Activated CD4-positive, alpha-beta T cell treated with anti-CD3 and anti-CD28 coated beads for 36 hours (primary cell): ENCODE measurements at regions of chr1 and their contacts with region 1.

Region 1: DNA sequence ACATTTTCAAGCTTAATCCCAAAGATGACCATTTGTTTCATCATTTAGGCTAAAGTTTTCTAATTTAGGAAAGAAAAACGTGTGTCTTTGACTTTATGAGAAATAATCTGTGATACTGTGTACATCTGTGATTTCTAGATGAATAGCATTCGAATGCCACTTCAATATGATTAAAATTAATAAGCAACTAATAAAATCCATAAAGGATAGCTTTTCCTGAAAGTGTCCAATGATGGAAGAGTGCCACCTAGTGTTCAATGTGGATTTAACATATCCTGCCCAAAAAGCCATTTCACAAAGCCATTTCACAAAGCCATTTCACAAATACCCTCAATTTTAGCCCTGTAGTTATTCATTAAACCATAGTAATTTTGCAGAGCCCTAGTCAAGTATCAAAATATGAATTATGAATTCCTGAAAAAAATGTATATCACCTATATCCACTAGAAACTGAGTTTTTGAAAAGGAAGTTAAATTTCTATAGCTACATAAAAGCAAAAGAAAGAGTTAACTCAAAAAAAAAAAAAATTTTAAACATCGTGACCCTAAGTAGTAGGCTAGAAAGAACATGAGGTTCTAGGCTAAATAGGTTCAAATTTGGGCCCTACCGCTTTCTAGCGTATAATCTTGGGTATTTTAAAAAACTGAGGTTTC is 19.1 kb downstream of the NME7 start:
- DNase-seq: no peak
- ATAC-seq: no peak
- H3K4me3 Mint-ChIP-seq: no peak overlapping the region
- H3K27ac Mint-ChIP-seq: no peak overlapping the region
- H3K4me1 Mint-ChIP-seq: peaks cover 14% of the 10 kb centered on the region
- H3K27me3 Mint-ChIP-seq: no peaks in the 10 kb centered on the region

Region 2: GRCh38 chr1:168603501-168604110 is 744.9 kb before region 1 on chr1:
- CTCF ChIA-PET with region 1: interaction called, 63 read pairs
- POLR2A ChIA-PET with region 1: no interaction called
- intact Hi-C with region 1: loop called (anchors 1 kb)
- DNase-seq: peak; percentile 84
- ATAC-seq: peak; percentile 78
- H3K4me3 Mint-ChIP-seq: no peak overlapping the region
- H3K27ac Mint-ChIP-seq: no peak overlapping the region
- H3K4me1 Mint-ChIP-seq: no peaks in the 10 kb centered on the region
- H3K27me3 Mint-ChIP-seq: no peaks in the 10 kb centered on the region

Region 3: GRCh38 chr1:169106095-169106920 is 242.2 kb before region 1 on chr1 and contains the start of gene ATP1B1:
- CTCF ChIA-PET with region 1: interaction called, 6 read pairs
- POLR2A ChIA-PET with region 1: no interaction called
- intact Hi-C with region 1: loop called in 1 of 2 experiments (anchors 5 kb)
- DNase-seq: peak; percentile 88
- ATAC-seq: peak; percentile 91
- H3K4me3 Mint-ChIP-seq: peak within 1 kb of the TSS; percentile 78
- H3K27ac Mint-ChIP-seq: peak within 1 kb of the TSS; percentile 63
- H3K4me1 Mint-ChIP-seq: peaks cover 41% of the 10 kb centered on the region
- H3K27me3 Mint-ChIP-seq: peaks cover 18% of the 10 kb centered on the region
- total RNA-seq, gene ATP1B1: 2.9 to 3.3 TPM

Region 4: GRCh38 chr1:169312084-169312954 is 36.2 kb before region 1 on chr1:
- CTCF ChIA-PET with region 1: interaction called, 11 read pairs
- POLR2A ChIA-PET with region 1: no interaction called
- intact Hi-C with region 1: no loop called
- DNase-seq: peak; percentile 44
- ATAC-seq: peak; percentile 94
- H3K4me3 Mint-ChIP-seq: no peak overlapping the region
- H3K27ac Mint-ChIP-seq: peak overlapping the region; percentile 31
- H3K4me1 Mint-ChIP-seq: peaks cover 17% of the 10 kb centered on the region
- H3K27me3 Mint-ChIP-seq: no peaks in the 10 kb centered on the region